ENCODE measurements at regions of chr3 and their contacts with region 1.

Region 1: GRCh38 chr3:121883507-121883906 is 10.7 kb upstream of the SLC15A2 start:
- DNase-seq: peak in 1 of 35 experiments; percentile 6
- ATAC-seq: no peak
- H3K4me3 ChIP-seq: no peak overlapping the region
- H3K4me3 Mint-ChIP-seq: no peak overlapping the region
- H3K27ac ChIP-seq: no peak overlapping the region
- H3K27ac Mint-ChIP-seq: no peak overlapping the region
- H3K4me1 ChIP-seq: no peaks in the 10 kb centered on the region
- H3K4me1 Mint-ChIP-seq: no peaks in the 10 kb centered on the region
- H3K27me3 ChIP-seq: no peaks in the 10 kb centered on the region
- H3K27me3 Mint-ChIP-seq: no peaks in the 10 kb centered on the region

Region 2: GRCh38 chr3:121896672-121897222 is 13.2 kb after region 1 on chr3:
- CTCF ChIA-PET with region 1: no interaction called
- POLR2A ChIA-PET with region 1: interaction called in 1 of 2 experiments, 14 read pairs
- DNase-seq: no peak
- ATAC-seq: no peak
- H3K4me3 ChIP-seq: no peak overlapping the region
- H3K4me3 Mint-ChIP-seq: no peak overlapping the region
- H3K27ac ChIP-seq: no peak overlapping the region
- H3K27ac Mint-ChIP-seq: no peak overlapping the region
- H3K4me1 ChIP-seq: no peaks in the 10 kb centered on the region
- H3K4me1 Mint-ChIP-seq: no peaks in the 10 kb centered on the region
- H3K27me3 ChIP-seq: no peaks in the 10 kb centered on the region
- H3K27me3 Mint-ChIP-seq: no peaks in the 10 kb centered on the region

Measured in T-cell (primary cell).